Activated CD4-positive, alpha-beta memory T cell treated with anti-CD3 and anti-CD28 coated beads for 36 hours (primary cell): ENCODE measurements at regions of chr6 and their contacts with region 1.

Region 1: GRCh38 chr6:108052706-108053105 is 21.8 kb downstream of the OSTM1 start:
- DNase-seq: no peak
- H3K4me3 Mint-ChIP-seq: no peak overlapping the region
- H3K27ac Mint-ChIP-seq: no peak overlapping the region
- H3K4me1 Mint-ChIP-seq: no peaks in the 10 kb centered on the region
- H3K27me3 Mint-ChIP-seq: no peaks in the 10 kb centered on the region

Region 2: GRCh38 chr6:107866606-107867301 is 186.0 kb before region 1 on chr6:
- CTCF ChIA-PET with region 1: interaction called, 16 read pairs
- POLR2A ChIA-PET with region 1: no interaction called
- intact Hi-C with region 1: loop called (anchors 5 kb)
- DNase-seq: no peak
- H3K4me3 Mint-ChIP-seq: no peak overlapping the region
- H3K27ac Mint-ChIP-seq: no peak overlapping the region
- H3K4me1 Mint-ChIP-seq: peaks cover 13% of the 10 kb centered on the region
- H3K27me3 Mint-ChIP-seq: no peaks in the 10 kb centered on the region

Region 3: GRCh38 chr6:107977283-107977682 is 75.4 kb before region 1 on chr6:
- CTCF ChIA-PET with region 1: interaction called, 15 read pairs
- POLR2A ChIA-PET with region 1: no interaction called
- intact Hi-C with region 1: loop called (anchors 1 kb)
- DNase-seq: no peak
- H3K4me3 Mint-ChIP-seq: no peak overlapping the region
- H3K27ac Mint-ChIP-seq: no peak overlapping the region
- H3K4me1 Mint-ChIP-seq: no peaks in the 10 kb centered on the region
- H3K27me3 Mint-ChIP-seq: no peaks in the 10 kb centered on the region

Region 4: GRCh38 chr6:108029226-108029921 is 23.3 kb before region 1 on chr6:
- CTCF ChIA-PET with region 1: no interaction called
- POLR2A ChIA-PET with region 1: no interaction called
- intact Hi-C with region 1: no loop called
- DNase-seq: no peak
- H3K4me3 Mint-ChIP-seq: no peak overlapping the region
- H3K27ac Mint-ChIP-seq: no peak overlapping the region
- H3K4me1 Mint-ChIP-seq: no peaks in the 10 kb centered on the region
- H3K27me3 Mint-ChIP-seq: no peaks in the 10 kb centered on the region

Region 5: GRCh38 chr6:108039681-108040080 is 13.0 kb before region 1 on chr6:
- CTCF ChIA-PET with region 1: interaction called, 12 read pairs
- POLR2A ChIA-PET with region 1: no interaction called
- intact Hi-C with region 1: no loop called
- DNase-seq: no peak
- H3K4me3 Mint-ChIP-seq: no peak overlapping the region
- H3K27ac Mint-ChIP-seq: no peak overlapping the region
- H3K4me1 Mint-ChIP-seq: no peaks in the 10 kb centered on the region
- H3K27me3 Mint-ChIP-seq: no peaks in the 10 kb centered on the region